Lower leg skin (tissue), 4 donors: ENCODE measurements at regions of chr14 and their contacts with region 1.

Region 1: DNA sequence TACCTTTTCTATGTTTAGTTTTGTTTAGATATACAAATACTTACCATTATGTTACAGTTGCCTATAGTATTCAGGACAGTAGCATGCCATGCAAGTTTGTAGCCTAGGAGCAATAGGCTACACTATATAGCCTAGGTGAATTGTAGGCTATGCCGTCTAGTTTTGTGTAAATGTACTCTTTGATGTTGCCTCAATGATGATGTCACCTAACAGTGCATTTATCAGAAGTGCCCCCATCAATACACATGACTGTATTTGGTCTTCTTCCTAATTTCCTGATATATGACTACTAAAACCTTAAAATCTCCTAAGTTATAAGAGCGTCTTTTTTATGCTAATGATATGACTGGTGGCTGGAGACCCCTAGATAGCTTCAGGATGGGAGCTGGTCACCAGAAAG is 394.4 kb upstream of the STXBP6 start:
- DNase-seq: no peak
- H3K4me3 ChIP-seq: no peak overlapping the region
- CTCF ChIP-seq: no peak
- POLR2A ChIP-seq: no peak

Region 2: DNA sequence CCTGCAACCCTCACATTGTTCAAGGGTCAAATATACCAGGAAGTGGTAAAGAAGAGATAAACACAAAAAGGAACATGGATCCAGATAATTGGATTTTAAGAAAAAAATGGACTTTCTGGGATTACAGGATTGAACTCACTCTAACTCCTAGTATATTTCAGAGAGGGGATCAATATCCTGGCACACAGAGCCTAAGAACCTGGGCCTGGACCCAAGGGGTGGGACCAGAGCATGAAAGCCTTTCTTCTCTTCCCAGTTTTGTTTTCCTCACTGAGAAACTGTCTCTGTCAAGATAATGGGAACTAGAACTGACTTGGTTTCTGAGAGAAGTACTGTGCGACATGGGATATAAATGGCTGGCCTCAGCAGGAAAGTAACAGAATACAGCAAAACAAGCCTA is 28.3 kb after region 1 on chr14:
- intact Hi-C with region 1: no loop called
- DNase-seq: no peak
- H3K4me3 ChIP-seq: no peak overlapping the region
- CTCF ChIP-seq: no peak
- POLR2A ChIP-seq: no peak

Region 3: DNA sequence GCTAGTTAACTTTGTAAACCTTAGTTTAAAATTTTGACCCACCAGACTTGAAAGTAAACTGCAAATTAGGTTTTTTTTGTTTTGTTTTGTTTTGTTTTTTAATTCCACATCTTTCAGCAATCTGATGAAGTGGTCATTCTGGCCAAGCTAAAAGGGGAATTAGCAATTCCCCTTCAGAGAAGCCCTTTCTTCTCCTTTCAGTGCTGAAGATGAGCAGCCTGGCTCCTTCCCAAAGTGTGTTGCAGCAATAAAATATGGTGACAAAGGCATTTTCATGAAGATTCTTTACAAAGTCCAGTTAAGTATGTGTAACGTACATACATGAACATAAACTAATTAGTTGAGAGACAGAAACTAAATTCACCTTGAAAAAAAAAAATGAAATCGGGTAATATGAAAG is 773.4 kb after region 1 on chr14:
- intact Hi-C with region 1: loop called (anchors 10 kb)
- DNase-seq: no peak
- H3K4me3 ChIP-seq: no peak overlapping the region
- CTCF ChIP-seq: no peak
- POLR2A ChIP-seq: no peak

Region 4: DNA sequence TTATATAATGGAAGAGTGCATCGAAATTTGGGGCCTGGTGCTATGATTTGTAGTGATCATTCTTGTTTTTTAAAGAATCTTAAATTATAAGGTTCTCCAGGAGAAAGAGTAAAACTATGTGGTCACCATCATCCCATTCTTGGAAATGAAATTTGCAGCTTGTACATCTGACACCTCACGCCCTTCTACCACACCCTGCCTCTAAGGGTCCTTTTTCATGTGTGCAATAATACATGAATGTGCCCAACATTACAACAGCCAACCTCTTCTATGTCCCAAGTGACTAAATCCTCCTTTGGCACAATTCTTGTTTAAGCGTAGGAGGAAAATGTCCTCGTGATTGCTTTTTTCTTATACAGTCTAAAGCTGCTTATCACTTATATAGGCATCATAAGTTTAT is 1790.0 kb after region 1 on chr14:
- intact Hi-C with region 1: loop called (anchors 5 kb)
- DNase-seq: no peak
- H3K4me3 ChIP-seq: no peak overlapping the region
- CTCF ChIP-seq: no peak
- POLR2A ChIP-seq: no peak